Posterior cingulate gyrus (tissue), 11 donors: ENCODE measurements at regions of chr5 and their contacts with region 1.

Region 1: GRCh38 chr5:58886315-58887207 is 303.7 kb downstream of the RAB3C start:
- DNase-seq: peak in 8 of 10 donors; percentile 48 to 94 (median 64)

Region 2: GRCh38 chr5:58940446-58940845 is 53.9 kb after region 1 on chr5:
- intact Hi-C with region 1: no loop called
- DNase-seq: no peak

Region 3: GRCh38 chr5:59007460-59008063 is 121.0 kb after region 1 on chr5:
- intact Hi-C with region 1: loop called (anchors 2 kb)
- DNase-seq: no peak

Region 4: DNA sequence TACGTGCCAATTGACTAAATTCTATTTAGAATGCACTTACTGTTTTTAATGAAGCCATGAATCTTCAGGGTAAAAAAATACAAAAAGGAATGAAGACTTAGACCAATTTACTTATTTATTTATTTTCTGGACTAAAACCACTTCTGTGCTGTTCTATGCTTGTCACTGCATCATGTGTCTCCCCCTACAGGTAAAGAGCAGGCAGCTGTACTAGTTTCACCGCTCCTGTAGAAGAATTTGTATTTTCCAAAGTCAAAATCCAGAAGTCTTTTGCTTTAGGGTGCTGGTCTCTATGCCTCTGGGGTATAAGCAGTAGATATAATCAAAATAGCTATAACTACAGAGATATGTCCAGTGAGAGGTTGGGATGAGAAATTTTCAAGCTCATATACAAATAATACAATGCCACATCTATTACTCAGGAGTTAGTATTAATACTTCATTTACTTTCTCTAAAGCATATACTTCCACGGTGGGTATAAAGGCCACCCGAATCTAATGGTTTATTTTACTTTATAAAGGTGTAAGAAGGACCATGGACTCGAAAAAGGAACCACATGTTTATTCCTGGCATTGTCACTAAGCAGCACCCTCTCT is 287.8 kb after region 1 on chr5:
- intact Hi-C with region 1: loop called (anchors 5 kb)
- DNase-seq: no peak

Region 5: GRCh38 chr5:59380350-59380951 is 493.9 kb after region 1 on chr5:
- intact Hi-C with region 1: loop called (anchors 5 kb)
- DNase-seq: no peak